PC-3 (cell line): ENCODE measurements at regions of chr16 and their contacts with region 1.

Region 1: GRCh38 chr16:88383401-88384221 is 852 bp downstream of the ZNF469 start:
- DNase-seq: peak; percentile 42
- ATAC-seq: peak; percentile 40
- H3K4me3 ChIP-seq: peak overlapping the region; percentile 68
- H3K27ac ChIP-seq: peak overlapping the region; percentile 60
- H3K4me1 ChIP-seq: peaks cover 22% of the 10 kb centered on the region
- H3K27me3 ChIP-seq: no peaks in the 10 kb centered on the region
- CTCF ChIP-seq: peak; percentile 44; the same call in 1 of the 2 replicates

Region 2: GRCh38 chr16:88303890-88304819 is 79.5 kb before region 1 on chr16:
- CTCF ChIA-PET with region 1: no interaction called
- POLR2A ChIA-PET with region 1: no interaction called
- intact Hi-C with region 1: no loop called
- DNase-seq: peak; percentile 21
- ATAC-seq: no peak
- H3K4me3 ChIP-seq: no peak overlapping the region
- H3K27ac ChIP-seq: no peak overlapping the region
- H3K4me1 ChIP-seq: peaks cover 6% of the 10 kb centered on the region; the same call in 1 of the 2 replicates
- H3K27me3 ChIP-seq: no peaks in the 10 kb centered on the region
- CTCF ChIP-seq: no peak

Region 3: DNA sequence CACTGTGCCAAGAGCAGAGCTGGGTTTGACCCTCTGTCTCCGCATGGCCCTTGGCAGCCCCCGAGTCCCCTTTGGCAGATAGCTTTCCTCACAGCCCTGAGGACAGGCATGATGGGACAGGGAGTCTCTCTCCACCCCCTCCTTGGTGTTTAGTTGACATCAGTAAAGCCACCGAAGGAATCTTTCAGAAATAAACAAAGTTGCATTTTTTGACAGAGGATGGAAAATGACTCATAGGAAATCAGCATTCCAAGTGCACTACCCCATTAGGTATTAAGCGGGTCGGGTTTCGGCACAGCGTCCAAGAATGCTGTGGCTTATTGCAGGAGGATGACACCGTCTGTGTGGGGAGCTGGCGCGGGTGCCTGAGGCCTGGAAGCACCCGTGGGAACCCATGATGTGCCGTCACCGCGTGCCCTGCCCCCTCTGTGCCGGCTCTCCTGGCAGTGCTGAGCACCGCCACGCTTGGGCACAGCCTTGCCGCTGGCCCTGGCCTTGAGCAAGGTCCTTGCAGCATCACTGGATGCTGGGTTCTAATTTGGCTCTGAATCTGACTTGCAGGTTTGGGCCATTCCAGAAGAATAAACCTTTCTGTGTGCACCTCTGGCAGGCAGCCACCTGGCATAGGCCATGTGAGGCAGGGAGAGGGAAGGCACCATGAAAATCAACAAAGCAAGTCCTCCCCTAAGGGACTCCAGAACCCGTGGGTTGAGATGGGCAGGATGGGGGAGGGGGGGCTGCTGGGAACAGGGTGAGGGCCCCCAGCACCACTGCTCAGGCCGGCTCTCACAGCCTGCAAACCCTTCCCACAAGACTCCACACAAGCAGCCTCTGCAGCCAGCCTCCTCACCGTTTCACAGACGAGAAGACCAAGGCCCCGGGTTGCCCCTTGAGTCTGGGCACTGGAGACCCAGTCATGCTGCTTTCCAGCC is 51.4 kb before region 1 on chr16:
- CTCF ChIA-PET with region 1: no interaction called
- POLR2A ChIA-PET with region 1: no interaction called
- intact Hi-C with region 1: loop called (anchors 10 kb)
- DNase-seq: peak; percentile 98
- ATAC-seq: peak; percentile 90
- H3K4me3 ChIP-seq: no peak overlapping the region
- H3K27ac ChIP-seq: peak overlapping the region; percentile 100
- H3K4me1 ChIP-seq: peaks cover 27% of the 10 kb centered on the region
- H3K27me3 ChIP-seq: no peaks in the 10 kb centered on the region
- CTCF ChIP-seq: no peak

Region 4: DNA sequence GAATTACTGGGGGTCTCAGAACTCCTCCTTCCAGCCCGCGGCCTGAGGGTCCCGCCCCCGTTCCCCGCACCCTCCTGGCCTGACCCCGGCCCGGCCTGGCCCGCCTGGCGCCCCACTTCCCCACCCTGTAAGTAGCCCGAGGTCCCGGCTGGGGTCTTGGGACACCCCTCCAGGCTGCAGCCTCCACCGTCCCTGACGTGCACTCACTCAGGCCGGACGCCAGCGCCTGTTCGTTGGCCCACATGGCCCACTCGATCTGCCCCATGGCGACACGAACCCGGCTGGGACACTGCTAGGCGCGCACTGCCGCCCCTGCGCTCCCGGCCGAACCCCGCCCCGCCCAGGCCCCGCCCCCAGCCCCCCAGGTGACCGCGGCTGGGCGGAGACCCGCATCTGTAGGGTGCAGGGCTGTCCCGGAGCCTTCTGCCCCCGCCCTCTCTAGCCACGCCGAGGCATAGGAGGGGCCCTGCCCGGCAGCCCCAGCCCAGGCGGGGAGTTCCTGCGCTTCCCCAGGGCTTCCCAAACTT is 267.2 kb after region 1 on chr16 and contains the start of gene CYBA:
- CTCF ChIA-PET with region 1: no interaction called
- POLR2A ChIA-PET with region 1: no interaction called
- intact Hi-C with region 1: no loop called
- DNase-seq: no peak
- ATAC-seq: no peak
- H3K4me3 ChIP-seq: no peak within 1 kb of the TSS
- H3K27ac ChIP-seq: no peak within 1 kb of the TSS
- H3K4me1 ChIP-seq: no peaks in the 10 kb centered on the region
- H3K27me3 ChIP-seq: no peaks in the 10 kb centered on the region
- CTCF ChIP-seq: no peak
- total RNA-seq, gene CYBA: not detected in 2 replicates